GM18951 (cell line): ENCODE measurements at regions of chr22 and their contacts with region 1.

Region 1: DNA sequence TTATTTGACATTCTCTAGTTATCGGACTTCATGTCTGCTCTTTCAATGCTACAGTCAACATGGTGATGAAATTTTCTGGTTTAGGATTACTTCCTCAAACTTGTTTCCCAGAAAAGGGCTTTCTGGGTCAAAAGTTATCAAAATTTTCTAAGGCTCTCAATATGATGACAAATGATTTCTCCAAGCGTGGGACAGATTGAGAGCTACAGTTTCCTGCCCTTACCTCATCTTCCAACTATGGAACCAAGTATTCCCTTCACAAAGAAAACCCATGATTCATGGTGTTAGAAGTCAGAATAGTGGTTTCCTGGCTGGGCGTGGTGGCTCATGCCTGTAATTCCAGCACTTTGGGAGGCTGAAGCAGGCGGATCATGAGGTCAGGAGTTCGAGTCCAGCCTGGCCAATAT is 17.8 kb downstream of the MYO18B start:
- POLR2A ChIP-seq: no peak

Region 2: GRCh38 chr22:25465949-25466348 is 293.9 kb before region 1 on chr22:
- in situ Hi-C with region 1: loop called (anchors 5 kb)
- POLR2A ChIP-seq: no peak

Region 3: GRCh38 chr22:25554238-25554671 is 205.6 kb before region 1 on chr22:
- in situ Hi-C with region 1: loop called (anchors 10 kb)
- POLR2A ChIP-seq: no peak

Region 4: GRCh38 chr22:25666308-25666707 is 93.5 kb before region 1 on chr22:
- in situ Hi-C with region 1: no loop called
- POLR2A ChIP-seq: no peak

Region 5: GRCh38 chr22:26287382-26288225 is 527.8 kb after region 1 on chr22:
- in situ Hi-C with region 1: no loop called
- POLR2A ChIP-seq: no peak